ENCODE measurements at regions of chr9 and their contacts with region 1.

Region 1: GRCh38 chr9:20941174-20941690 is 90.2 kb downstream of the HACD4 start:
- DNase-seq: peak in 1 of 2 donors; percentile 37
- H3K4me3 ChIP-seq: no peak overlapping the region
- H3K27ac ChIP-seq: no peak overlapping the region
- H3K4me1 ChIP-seq: no peaks in the 10 kb centered on the region
- H3K27me3 ChIP-seq: no peaks in the 10 kb centered on the region
- CTCF ChIP-seq: peak; percentile 69 to 76

Region 2: DNA sequence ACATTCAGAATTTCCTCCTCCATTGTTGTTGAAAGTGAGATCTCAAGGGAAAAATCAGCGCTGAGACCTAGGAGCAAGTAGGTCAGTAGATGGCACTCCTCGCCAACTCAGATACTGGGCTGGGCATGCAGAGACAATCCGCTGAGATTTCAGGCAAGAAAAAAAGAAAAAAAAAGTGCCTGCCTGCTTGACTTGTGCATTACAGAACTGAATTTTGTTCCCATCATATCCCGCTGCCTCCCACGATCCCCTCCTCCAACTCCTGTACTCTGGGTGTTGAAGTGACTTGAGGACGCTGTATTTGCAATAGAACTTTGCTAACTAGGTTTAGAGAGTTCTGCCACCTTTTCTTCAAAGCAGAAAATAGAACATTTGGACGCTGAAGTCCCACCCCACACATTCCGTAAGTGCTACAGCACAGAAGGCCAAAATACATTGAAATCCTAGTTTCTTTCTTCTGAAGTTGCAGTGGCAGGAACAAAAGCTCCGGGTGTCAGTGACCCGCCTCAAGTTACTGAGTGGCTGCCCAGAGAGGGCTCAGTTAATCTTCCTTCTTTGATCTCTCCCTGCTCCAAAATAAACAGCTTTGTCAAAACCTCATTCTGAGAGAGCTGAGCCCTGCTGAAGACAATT is 584.7 kb before region 1 on chr9:
- intact Hi-C with region 1: loop called (anchors 5 kb)
- DNase-seq: peak; percentile 50 to 71
- H3K4me3 ChIP-seq: peak overlapping the region; percentile 22 to 33
- H3K27ac ChIP-seq: peak overlapping the region; percentile 25 to 45
- H3K4me1 ChIP-seq: peaks cover 0 to 31% (median 13%) of the 10 kb centered on the region in 4 donors
- H3K27me3 ChIP-seq: no peaks in the 10 kb centered on the region
- CTCF ChIP-seq: peak; percentile 46 to 66

Region 3: DNA sequence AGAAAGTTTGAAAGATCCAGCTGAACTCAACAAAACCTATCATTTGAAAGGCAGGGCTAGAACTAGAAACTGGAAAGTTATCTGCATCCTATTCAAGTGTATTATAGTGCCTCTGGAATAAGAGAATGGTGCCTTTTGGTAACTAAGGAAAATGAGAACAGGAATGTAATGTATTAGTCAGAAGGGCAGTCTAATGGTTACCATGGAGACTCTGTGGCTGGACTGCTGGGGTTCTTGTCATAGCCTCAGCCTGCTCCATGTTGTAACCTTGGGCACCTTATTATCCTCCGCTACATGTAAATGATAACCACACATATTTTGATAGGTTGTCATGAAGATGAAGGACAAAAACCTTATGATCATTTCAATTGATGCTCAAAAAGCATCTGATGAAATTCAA is 161.1 kb after region 1 on chr9:
- intact Hi-C with region 1: loop called (anchors 10 kb)
- DNase-seq: no peak
- H3K4me3 ChIP-seq: no peak overlapping the region
- H3K27ac ChIP-seq: no peak overlapping the region
- H3K4me1 ChIP-seq: peaks cover 0 to 7% (median 0%) of the 10 kb centered on the region in 4 donors
- H3K27me3 ChIP-seq: no peaks in the 10 kb centered on the region
- CTCF ChIP-seq: no peak

Measured in tibial artery (tissue), 4 donors.